Panc1 (cell line): ENCODE measurements at regions of chr6 and their contacts with region 1.

Region 1: DNA sequence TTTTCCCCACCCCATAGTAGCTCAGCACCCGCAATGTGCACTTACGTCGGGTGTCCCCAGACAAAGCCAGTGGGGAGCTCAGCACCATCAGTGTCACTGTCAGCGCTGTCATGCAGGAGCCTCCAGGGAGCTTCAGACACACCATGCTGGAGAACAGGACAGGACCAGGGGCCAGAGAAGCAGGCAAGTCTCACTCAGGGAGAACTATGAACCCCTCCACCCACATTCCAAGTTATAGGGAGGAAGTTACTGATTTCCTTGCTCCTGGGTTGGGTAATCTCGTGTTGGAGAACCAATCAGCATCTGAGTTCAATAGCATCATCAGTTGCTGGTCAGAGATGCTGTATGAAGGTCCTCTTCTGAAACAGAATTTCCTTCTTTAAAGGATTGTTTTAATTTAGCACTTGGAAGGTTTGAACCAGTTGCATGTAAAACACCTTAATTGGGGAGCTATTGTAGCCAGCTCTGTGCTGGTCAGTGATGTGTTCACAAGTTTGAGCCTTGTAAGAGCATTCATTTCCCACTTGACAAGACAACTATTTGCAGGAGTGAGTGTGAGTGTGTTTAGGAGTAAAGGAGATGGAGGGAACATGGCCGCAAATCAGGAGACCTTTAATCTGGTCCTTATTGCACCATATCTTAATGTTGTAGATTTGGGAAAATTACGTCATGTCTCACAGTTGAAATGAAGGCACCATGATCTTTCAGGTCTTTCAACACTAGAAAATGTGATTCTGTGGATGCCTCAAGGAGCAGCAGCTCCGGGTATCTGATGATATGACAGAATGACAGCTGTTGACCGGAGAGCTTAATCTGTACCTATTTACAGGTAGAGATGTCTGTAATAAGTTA is at the start of gene HLA-DRB1:
- DNase-seq: no peak
- ATAC-seq: peak; percentile 94
- H3K4me3 ChIP-seq: no peak within 1 kb of the TSS
- H3K27ac ChIP-seq: no peak within 1 kb of the TSS
- H3K4me1 ChIP-seq: no peaks in the 10 kb centered on the region
- H3K27me3 ChIP-seq: no peaks in the 10 kb centered on the region; the same call in 1 of the 2 replicates
- CTCF ChIP-seq: no peak
- total RNA-seq, gene HLA-DRB1: 1.1 TPM

Region 2: GRCh38 chr6:32371229-32371628 is 218.6 kb before region 1 on chr6:
- CTCF ChIA-PET with region 1: no interaction called
- POLR2A ChIA-PET with region 1: no interaction called
- in situ Hi-C with region 1: no loop called
- intact Hi-C with region 1: no loop called
- DNase-seq: no peak
- ATAC-seq: no peak
- H3K4me3 ChIP-seq: no peak overlapping the region
- H3K27ac ChIP-seq: no peak overlapping the region
- H3K4me1 ChIP-seq: no peaks in the 10 kb centered on the region
- H3K27me3 ChIP-seq: no peaks in the 10 kb centered on the region
- CTCF ChIP-seq: no peak

Region 3: GRCh38 chr6:32529697-32530429 is 60.0 kb before region 1 on chr6 and contains the start of gene HLA-DRB5:
- CTCF ChIA-PET with region 1: no interaction called
- POLR2A ChIA-PET with region 1: no interaction called
- in situ Hi-C with region 1: no loop called
- intact Hi-C with region 1: loop called (anchors 2 kb)
- DNase-seq: no peak
- ATAC-seq: no peak
- H3K4me3 ChIP-seq: no peak within 1 kb of the TSS
- H3K27ac ChIP-seq: no peak within 1 kb of the TSS
- H3K4me1 ChIP-seq: no peaks in the 10 kb centered on the region
- H3K27me3 ChIP-seq: no peaks in the 10 kb centered on the region
- CTCF ChIP-seq: no peak
- total RNA-seq, gene HLA-DRB5: not detected